ENCODE measurements at regions of chr1 and their contacts with region 1.

Region 1: DNA sequence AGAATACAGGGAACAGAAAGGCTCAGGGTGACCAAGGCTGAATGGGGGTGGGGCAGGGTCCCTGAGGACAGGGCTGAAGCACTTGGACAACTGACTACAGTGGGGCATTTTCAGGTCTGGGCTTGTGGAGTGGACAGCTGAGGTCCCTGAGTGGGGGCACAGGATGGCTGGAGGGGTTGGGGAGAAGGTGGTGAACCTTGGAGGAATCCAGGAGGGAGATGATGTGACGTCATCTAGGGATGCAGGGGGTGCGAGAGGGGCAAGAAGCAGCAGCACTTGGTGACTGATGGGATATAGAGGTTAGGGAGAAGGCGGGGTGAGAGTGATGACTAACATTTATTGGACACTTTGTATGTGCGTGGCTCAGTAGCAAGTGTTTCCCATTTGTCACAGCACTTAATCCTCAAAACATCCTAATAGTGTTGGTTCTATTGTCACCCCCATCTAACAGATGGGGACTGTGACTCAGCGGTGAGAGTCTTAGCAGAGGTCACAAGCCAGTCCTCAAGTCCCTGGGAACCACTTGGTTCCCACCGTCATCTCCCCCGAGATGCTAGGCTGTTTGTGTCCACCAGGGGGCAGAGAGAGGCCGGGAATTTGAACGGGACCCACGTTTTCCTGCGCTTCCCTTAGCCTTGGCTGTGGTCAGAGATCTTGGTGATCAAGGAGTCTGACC is 27.9 kb upstream of the BMP8B start:
- DNase-seq: peak; percentile 83
- H3K4me3 Mint-ChIP-seq: no peak overlapping the region
- H3K27ac Mint-ChIP-seq: peak overlapping the region; percentile 65
- H3K4me1 Mint-ChIP-seq: peaks cover 20% of the 10 kb centered on the region
- H3K27me3 Mint-ChIP-seq: peaks cover 15% of the 10 kb centered on the region
- CTCF ChIP-seq: peak; percentile 69

Region 2: GRCh38 chr1:39852214-39852791 is 35.8 kb after region 1 on chr1:
- CTCF ChIA-PET with region 1: no interaction called
- intact Hi-C with region 1: no loop called
- DNase-seq: no peak
- H3K4me3 Mint-ChIP-seq: no peak overlapping the region
- H3K27ac Mint-ChIP-seq: no peak overlapping the region
- H3K4me1 Mint-ChIP-seq: peaks cover 8% of the 10 kb centered on the region
- H3K27me3 Mint-ChIP-seq: no peaks in the 10 kb centered on the region
- CTCF ChIP-seq: no peak

Region 3: GRCh38 chr1:39901698-39902459 is 85.3 kb after region 1 on chr1 and contains the start of gene MYCL:
- CTCF ChIA-PET with region 1: interaction called, 26 read pairs
- intact Hi-C with region 1: loop called (anchors 2 kb)
- DNase-seq: peak; percentile 94
- H3K4me3 Mint-ChIP-seq: peak within 1 kb of the TSS; percentile 86
- H3K27ac Mint-ChIP-seq: no peak within 1 kb of the TSS
- H3K4me1 Mint-ChIP-seq: peaks cover 12% of the 10 kb centered on the region
- H3K27me3 Mint-ChIP-seq: peaks cover 56% of the 10 kb centered on the region
- CTCF ChIP-seq: peak; percentile 69
- total RNA-seq, gene MYCL: 0.59 and 0.78 TPM in 2 replicates

Region 4: DNA sequence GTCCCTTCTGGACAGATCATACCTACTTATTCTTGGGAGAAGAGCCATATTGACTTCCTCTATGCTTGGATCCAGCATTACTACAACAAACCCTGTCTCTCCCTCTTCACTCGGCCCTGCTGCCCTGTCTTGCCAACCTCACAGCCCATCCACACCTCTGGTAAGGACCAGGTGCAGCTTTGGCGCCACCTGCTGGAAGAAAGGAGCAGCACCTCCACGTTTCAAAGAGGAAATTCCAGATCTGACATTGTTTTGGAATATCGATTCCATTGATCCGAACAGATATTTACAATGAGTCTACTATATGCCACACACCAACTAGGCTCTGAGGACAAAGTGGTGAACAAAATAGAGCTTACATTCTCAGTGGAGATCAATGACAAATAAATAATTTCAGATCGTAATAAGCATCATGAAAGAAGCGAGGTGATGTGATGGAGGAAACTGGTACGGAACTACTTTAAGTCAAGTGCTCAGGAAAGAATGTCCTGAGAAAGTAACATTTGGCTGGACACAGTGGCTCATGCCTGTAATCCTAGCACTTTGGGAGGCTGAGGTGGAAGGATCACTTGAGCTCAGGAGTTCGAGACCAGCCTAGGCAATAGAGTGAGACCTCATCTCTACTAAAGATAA is 157.1 kb after region 1 on chr1:
- CTCF ChIA-PET with region 1: interaction called, 4 read pairs
- intact Hi-C with region 1: loop called (anchors 1 kb)
- DNase-seq: peak; percentile 77
- H3K4me3 Mint-ChIP-seq: no peak overlapping the region
- H3K27ac Mint-ChIP-seq: no peak overlapping the region
- H3K4me1 Mint-ChIP-seq: peaks cover 6% of the 10 kb centered on the region
- H3K27me3 Mint-ChIP-seq: peaks cover 20% of the 10 kb centered on the region
- CTCF ChIP-seq: peak; percentile 94

Region 5: GRCh38 chr1:40032240-40032891 is 215.8 kb after region 1 on chr1:
- CTCF ChIA-PET with region 1: no interaction called
- intact Hi-C with region 1: loop called (anchors 2 kb)
- DNase-seq: peak; percentile 60
- H3K4me3 Mint-ChIP-seq: no peak overlapping the region
- H3K27ac Mint-ChIP-seq: no peak overlapping the region
- H3K4me1 Mint-ChIP-seq: peaks cover 19% of the 10 kb centered on the region
- H3K27me3 Mint-ChIP-seq: peaks cover 17% of the 10 kb centered on the region
- CTCF ChIP-seq: peak; percentile 50

Measured in Calu3 (cell line).